Activated T-helper 2 cell treated with anti-CD3 and anti-CD28 coated beads, Interferon-gamma antibody, Interleukin-2, Interleukin-4, amounts not matched to agents 10 μg/mL and 5 μg/mL and 100 μg/mL, durations not matched to agents 14 hours and 24 hours and 36 hours (primary cell): ENCODE measurements at regions of chr13 and their contacts with region 1.

Region 1: GRCh38 chr13:49840266-49840665 is 47.8 kb upstream of the KPNA3 start:
- DNase-seq: no peak
- H3K4me3 Mint-ChIP-seq: no peak overlapping the region
- H3K27ac Mint-ChIP-seq: no peak overlapping the region
- H3K4me1 Mint-ChIP-seq: no peaks in the 10 kb centered on the region
- H3K27me3 Mint-ChIP-seq: no peaks in the 10 kb centered on the region

Region 2: DNA sequence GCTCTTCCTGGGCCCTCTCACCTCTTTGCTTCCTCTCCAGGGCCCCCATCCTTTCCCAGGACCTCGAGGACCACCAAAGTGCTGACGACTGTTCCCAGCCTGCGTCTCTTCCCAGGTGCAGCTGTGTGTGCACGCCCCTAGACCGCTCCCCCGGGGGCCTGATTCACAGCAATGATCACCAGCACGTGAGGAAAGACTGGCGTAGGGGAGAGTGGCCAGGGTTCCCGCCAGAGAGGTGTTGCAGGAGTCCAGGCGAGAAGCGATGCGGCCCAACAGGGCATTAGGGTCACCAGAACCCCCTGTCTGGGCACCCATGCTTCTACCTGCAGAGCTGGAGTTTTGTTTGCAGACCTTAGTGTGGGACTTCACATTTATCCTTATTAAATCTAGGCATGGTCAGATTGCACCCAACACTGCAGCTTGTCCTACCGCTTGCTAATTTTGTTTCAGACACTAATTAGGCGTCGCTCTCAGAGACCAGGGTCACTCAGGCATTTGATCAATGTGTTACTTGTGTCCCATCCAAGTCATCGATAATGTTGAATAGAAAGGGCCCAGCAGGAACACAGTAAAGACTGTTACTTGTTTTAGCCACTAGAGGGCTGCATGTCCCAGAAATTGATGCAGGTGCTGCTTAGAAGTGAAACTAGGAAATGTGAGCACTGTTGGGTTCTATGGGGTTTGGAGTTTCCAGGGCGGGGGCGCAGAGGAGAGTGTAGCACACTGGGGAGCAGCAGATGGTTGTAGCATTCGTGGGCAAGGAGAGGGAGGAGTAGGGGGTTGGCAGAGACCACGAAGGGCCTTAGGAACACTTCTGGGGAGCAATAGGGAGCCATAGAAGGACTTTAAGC is 539.3 kb before region 1 on chr13:
- intact Hi-C with region 1: loop called (anchors 5 kb)
- DNase-seq: peak; percentile 63
- H3K4me3 Mint-ChIP-seq: peak overlapping the region; percentile 24
- H3K27ac Mint-ChIP-seq: peak overlapping the region; percentile 47
- H3K4me1 Mint-ChIP-seq: peaks cover 12% of the 10 kb centered on the region
- H3K27me3 Mint-ChIP-seq: no peaks in the 10 kb centered on the region

Region 3: GRCh38 chr13:49436890-49437289 is 403.4 kb before region 1 on chr13:
- intact Hi-C with region 1: no loop called
- DNase-seq: no peak
- H3K4me3 Mint-ChIP-seq: no peak overlapping the region
- H3K27ac Mint-ChIP-seq: no peak overlapping the region
- H3K4me1 Mint-ChIP-seq: peaks cover 8% of the 10 kb centered on the region
- H3K27me3 Mint-ChIP-seq: peaks cover 13% of the 10 kb centered on the region

Region 4: GRCh38 chr13:49669735-49670309 is 170.4 kb before region 1 on chr13:
- intact Hi-C with region 1: loop called (anchors 5 kb)
- DNase-seq: no peak
- H3K4me3 Mint-ChIP-seq: no peak overlapping the region
- H3K27ac Mint-ChIP-seq: no peak overlapping the region
- H3K4me1 Mint-ChIP-seq: peaks cover 2% of the 10 kb centered on the region
- H3K27me3 Mint-ChIP-seq: no peaks in the 10 kb centered on the region

Region 5: DNA sequence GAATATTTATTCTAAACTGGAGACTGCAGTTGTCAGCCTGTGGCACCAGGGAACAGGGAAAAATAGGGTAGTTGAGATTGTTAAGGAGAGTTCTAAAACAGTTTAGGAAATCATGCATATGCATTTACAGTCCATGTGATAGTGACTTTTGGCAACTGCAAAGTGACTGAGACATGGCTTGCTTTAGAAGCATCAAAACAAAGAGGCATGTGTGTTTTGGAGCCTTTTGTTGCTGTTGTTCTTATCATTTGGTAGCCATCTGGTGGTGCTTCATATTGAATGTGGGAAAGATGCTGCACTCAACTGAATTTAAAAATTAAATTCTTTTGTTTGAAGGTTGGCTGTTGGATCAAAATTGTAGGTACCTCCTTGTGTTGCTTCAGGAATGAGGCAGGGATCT is 138.8 kb before region 1 on chr13:
- intact Hi-C with region 1: no loop called
- DNase-seq: no peak
- H3K4me3 Mint-ChIP-seq: no peak overlapping the region
- H3K27ac Mint-ChIP-seq: no peak overlapping the region
- H3K4me1 Mint-ChIP-seq: peaks cover 9% of the 10 kb centered on the region
- H3K27me3 Mint-ChIP-seq: no peaks in the 10 kb centered on the region